ENCODE measurements at regions of chr7 and their contacts with region 1.

Region 1: GRCh38 chr7:76262683-76263402 is 39.6 kb upstream of the HSPB1 start:
- DNase-seq: peak; percentile 85
- H3K4me3 ChIP-seq: no peak overlapping the region
- H3K27ac ChIP-seq: no peak overlapping the region
- H3K4me1 ChIP-seq: peaks cover 6% of the 10 kb centered on the region
- H3K27me3 ChIP-seq: peaks cover 10% of the 10 kb centered on the region
- CTCF ChIP-seq: peak; percentile 87

Region 2: GRCh38 chr7:75878769-75879611 is 383.9 kb before region 1 on chr7 and contains the start of gene RHBDD2:
- CTCF ChIA-PET with region 1: no interaction called
- POLR2A ChIA-PET with region 1: no interaction called
- intact Hi-C with region 1: no loop called
- DNase-seq: peak; percentile 96
- H3K4me3 ChIP-seq: peak within 1 kb of the TSS; percentile 75
- H3K27ac ChIP-seq: peak within 1 kb of the TSS; percentile 79
- H3K4me1 ChIP-seq: peaks cover 18% of the 10 kb centered on the region
- H3K27me3 ChIP-seq: no peaks in the 10 kb centered on the region
- CTCF ChIP-seq: no peak
- total RNA-seq, gene RHBDD2: 86.5 and 89.4 TPM in 2 replicates

Region 3: GRCh38 chr7:75994388-75995051 is 268.3 kb before region 1 on chr7 and contains the start of gene TMEM120A:
- CTCF ChIA-PET with region 1: no interaction called
- POLR2A ChIA-PET with region 1: no interaction called
- intact Hi-C with region 1: loop called (anchors 5 kb)
- DNase-seq: peak; percentile 95
- H3K4me3 ChIP-seq: peak within 1 kb of the TSS; percentile 95
- H3K27ac ChIP-seq: peak within 1 kb of the TSS; percentile 77
- H3K4me1 ChIP-seq: no peaks in the 10 kb centered on the region
- H3K27me3 ChIP-seq: no peaks in the 10 kb centered on the region
- CTCF ChIP-seq: peak; percentile 41
- total RNA-seq, gene TMEM120A: 18.7 and 18.9 TPM in 2 replicates

Region 4: GRCh38 chr7:76179686-76180085 is 83.2 kb before region 1 on chr7:
- CTCF ChIA-PET with region 1: interaction called, 13 read pairs
- POLR2A ChIA-PET with region 1: no interaction called
- intact Hi-C with region 1: loop called (anchors 1 kb)
- DNase-seq: no peak
- H3K4me3 ChIP-seq: no peak overlapping the region
- H3K27ac ChIP-seq: no peak overlapping the region
- H3K4me1 ChIP-seq: peaks cover 3% of the 10 kb centered on the region
- H3K27me3 ChIP-seq: no peaks in the 10 kb centered on the region
- CTCF ChIP-seq: no peak

Region 5: DNA sequence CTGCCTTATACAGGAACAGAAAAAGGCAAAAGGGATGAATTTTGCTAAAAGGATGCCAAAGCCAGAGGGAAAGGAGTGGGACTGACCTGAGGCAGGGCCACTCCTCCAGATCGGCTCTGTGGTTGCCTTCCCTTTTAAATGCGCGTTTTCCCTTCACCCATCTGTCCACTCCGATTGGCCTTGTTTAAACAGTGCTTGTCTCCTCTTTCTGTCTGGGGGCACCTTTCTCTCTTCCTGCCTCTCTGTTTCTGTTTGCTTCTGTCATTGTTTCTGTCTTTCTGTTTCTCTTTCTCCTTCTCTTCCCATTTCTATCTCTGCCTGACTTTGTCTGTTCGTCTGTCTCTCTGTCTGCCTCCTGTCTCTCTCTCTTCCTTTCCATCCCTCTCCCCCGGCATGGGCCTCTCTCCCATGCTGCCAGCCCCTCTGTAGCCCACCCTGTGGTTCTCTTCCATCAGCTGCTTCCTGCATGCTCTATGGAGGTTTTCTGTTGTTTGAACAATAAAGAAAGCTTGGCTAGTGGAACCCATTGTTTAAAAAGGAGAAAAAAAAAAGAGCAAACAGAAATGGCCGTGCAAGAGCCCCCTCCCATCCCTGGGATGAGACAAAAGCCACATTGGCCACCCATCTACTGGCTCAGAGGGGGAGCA is 10.1 kb after region 1 on chr7:
- CTCF ChIA-PET with region 1: interaction called, 4 read pairs
- POLR2A ChIA-PET with region 1: interaction called, 11 read pairs
- intact Hi-C with region 1: no loop called
- DNase-seq: no peak
- H3K4me3 ChIP-seq: no peak overlapping the region
- H3K27ac ChIP-seq: no peak overlapping the region
- H3K4me1 ChIP-seq: peaks cover 6% of the 10 kb centered on the region
- H3K27me3 ChIP-seq: no peaks in the 10 kb centered on the region
- CTCF ChIP-seq: no peak

Region 6: DNA sequence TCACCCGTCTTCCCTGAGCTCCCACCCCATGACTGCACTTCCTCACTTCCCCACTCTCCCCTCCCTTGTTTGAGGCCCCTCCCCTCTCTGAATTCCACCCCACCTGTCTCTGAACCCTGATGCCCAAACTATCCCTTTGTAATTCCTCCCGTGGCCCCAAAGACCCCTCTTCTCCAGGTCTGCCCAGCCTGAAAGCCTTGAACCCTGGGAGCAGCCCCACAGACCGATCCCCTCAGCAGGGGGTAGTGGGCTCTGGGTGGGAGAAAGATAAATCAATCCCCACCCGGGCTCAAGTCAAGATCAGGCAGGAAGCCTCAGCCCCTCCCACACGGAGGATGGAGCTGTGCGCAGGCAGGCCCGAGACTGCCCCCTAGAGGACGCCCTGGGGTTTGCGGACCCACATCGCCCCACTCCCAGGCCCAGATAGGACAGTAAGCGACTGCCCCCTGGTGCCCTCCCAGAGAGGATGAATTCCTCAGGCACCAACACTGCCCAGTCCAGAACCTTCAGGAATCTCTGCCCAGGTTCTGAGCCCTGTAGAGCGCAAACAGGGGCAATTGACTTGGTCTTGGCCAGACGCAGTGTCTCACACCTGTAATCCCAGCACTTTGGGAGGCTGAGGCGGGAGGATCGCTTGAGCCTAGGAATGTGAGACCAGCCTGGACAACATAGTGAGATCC is 51.3 kb after region 1 on chr7:
- CTCF ChIA-PET with region 1: interaction called, 13 read pairs
- POLR2A ChIA-PET with region 1: interaction called, 4 read pairs
- intact Hi-C with region 1: loop called (anchors 1 kb)
- DNase-seq: peak; percentile 95
- H3K4me3 ChIP-seq: no peak overlapping the region
- H3K27ac ChIP-seq: no peak overlapping the region
- H3K4me1 ChIP-seq: peaks cover 19% of the 10 kb centered on the region
- H3K27me3 ChIP-seq: no peaks in the 10 kb centered on the region
- CTCF ChIP-seq: peak; percentile 100